ENCODE measurements at regions of chr10 and their contacts with region 1.

Region 1: GRCh38 chr10:15168781-15169554 is 475 bp upstream of the NMT2 start:
- DNase-seq: peak; percentile 97 to 98
- ATAC-seq: peak; percentile 87 to 94 (median 93)
- H3K4me3 ChIP-seq: peak overlapping the region in 6 of 10 donors; percentile 22 to 46 (median 35)
- H3K27ac ChIP-seq: peak overlapping the region in 9 of 10 donors; percentile 14 to 82 (median 65)
- H3K4me1 ChIP-seq: peaks cover 7 to 40% (median 34%) of the 10 kb centered on the region in 9 donors
- H3K27me3 ChIP-seq: peaks cover 0 to 15% (median 0%) of the 10 kb centered on the region in 7 donors
- CTCF ChIP-seq: no peak

Region 2: GRCh38 chr10:14543046-14543903 is 625.7 kb before region 1 on chr10:
- intact Hi-C with region 1: no loop called
- DNase-seq: peak in 1 of 2 donors; percentile 37
- ATAC-seq: peak; percentile 44 to 88 (median 79)
- H3K4me3 ChIP-seq: no peak overlapping the region
- H3K27ac ChIP-seq: peak overlapping the region in 8 of 10 donors; percentile 4 to 79 (median 42)
- H3K4me1 ChIP-seq: peaks cover 0 to 46% (median 8%) of the 10 kb centered on the region in 9 donors
- H3K27me3 ChIP-seq: no peaks in the 10 kb centered on the region
- CTCF ChIP-seq: peak in 6 of 9 donors; percentile 18 to 53 (median 39)

Region 3: GRCh38 chr10:15067154-15067553 is 101.8 kb before region 1 on chr10:
- intact Hi-C with region 1: no loop called
- DNase-seq: no peak
- ATAC-seq: no peak
- H3K4me3 ChIP-seq: no peak overlapping the region
- H3K27ac ChIP-seq: no peak overlapping the region
- H3K4me1 ChIP-seq: no peaks in the 10 kb centered on the region
- H3K27me3 ChIP-seq: peaks cover 0 to 7% (median 0%) of the 10 kb centered on the region in 7 donors
- CTCF ChIP-seq: no peak

Region 4: DNA sequence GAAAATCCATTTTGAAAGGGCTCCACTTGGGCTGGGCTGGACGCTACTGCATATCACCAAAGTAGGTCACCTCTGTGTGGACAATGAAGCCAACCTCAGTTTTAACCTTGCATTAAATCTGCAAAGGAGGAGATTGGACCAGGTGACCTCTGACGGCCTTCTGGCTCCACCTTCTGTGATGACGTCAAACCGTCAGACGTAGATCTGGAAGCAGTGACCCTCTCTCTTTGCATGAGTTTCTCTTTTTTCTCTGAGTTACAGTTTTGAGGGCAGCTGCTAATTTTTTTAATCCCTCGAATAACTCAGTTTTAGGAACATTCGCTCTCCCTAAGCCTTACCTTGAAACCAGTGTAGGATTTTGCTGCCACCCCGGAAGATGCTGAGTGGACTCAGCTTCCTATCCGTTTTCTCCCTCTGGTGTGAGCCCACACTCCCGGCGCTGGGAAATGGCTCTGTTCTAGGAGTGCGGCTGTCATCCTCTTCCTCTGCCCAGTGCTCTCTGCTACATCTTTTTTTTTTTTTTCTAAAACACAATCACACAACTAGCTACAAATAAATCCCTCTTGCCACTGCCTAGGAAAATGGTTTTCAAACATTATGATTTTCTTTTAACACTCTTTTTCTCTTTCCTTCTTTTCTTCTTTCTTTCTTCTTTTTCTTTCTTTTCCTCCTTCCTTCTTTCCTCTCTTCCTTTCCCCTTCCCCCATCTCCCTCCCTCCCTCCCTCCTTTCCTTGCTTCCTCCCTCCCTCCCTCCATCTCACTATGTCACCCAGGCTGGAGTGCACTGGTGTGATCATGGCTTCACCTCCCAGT is 27.3 kb after region 1 on chr10:
- intact Hi-C with region 1: loop called in 1 of 10 experiments (anchors 1 kb)
- DNase-seq: peak in 1 of 2 donors; percentile 48
- ATAC-seq: peak in 6 of 8 donors; percentile 37 to 59 (median 53)
- H3K4me3 ChIP-seq: peak overlapping the region in 8 of 10 donors; percentile 19 to 48 (median 36)
- H3K27ac ChIP-seq: peak overlapping the region in 7 of 10 donors; percentile 7 to 61 (median 52)
- H3K4me1 ChIP-seq: peaks cover 0 to 38% (median 12%) of the 10 kb centered on the region in 9 donors
- H3K27me3 ChIP-seq: peaks cover 0 to 5% (median 0%) of the 10 kb centered on the region in 7 donors
- CTCF ChIP-seq: no peak

Region 5: GRCh38 chr10:15209827-15210509 is 41.0 kb after region 1 on chr10:
- intact Hi-C with region 1: no loop called
- DNase-seq: peak; percentile 60 to 86
- ATAC-seq: peak; percentile 81 to 94 (median 88)
- H3K4me3 ChIP-seq: no peak overlapping the region
- H3K27ac ChIP-seq: no peak overlapping the region
- H3K4me1 ChIP-seq: peaks cover 0 to 15% (median 5%) of the 10 kb centered on the region in 9 donors
- H3K27me3 ChIP-seq: peaks cover 0 to 3% (median 0%) of the 10 kb centered on the region in 7 donors
- CTCF ChIP-seq: peak; percentile 81 to 92 (median 88)

Region 6: DNA sequence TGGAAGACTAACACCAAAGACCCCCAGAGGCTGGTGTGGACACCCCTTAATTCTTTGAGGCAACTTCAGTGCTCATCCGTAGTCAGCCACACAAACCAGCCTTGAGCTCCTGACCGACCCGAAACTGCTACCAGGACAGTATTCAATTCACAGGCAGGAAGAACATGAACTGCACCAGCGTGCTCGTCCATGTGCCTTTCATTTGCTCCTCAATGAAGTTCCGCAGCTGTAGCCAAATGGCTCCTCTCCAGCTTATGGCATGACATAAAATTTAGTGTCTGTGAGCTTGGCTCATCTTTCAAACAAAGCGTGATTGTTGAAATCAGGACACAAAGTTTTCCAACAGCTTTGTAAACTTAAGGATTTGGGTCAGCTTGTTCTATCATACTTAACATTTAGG is 346.2 kb after region 1 on chr10:
- intact Hi-C with region 1: no loop called
- DNase-seq: no peak
- ATAC-seq: no peak
- H3K4me3 ChIP-seq: no peak overlapping the region
- H3K27ac ChIP-seq: no peak overlapping the region
- H3K4me1 ChIP-seq: no peaks in the 10 kb centered on the region
- H3K27me3 ChIP-seq: no peaks in the 10 kb centered on the region
- CTCF ChIP-seq: no peak

Measured in heart right ventricle (tissue), 16 donors.